Heart right ventricle (tissue), 16 donors: ENCODE measurements at regions of chr13 and their contacts with region 1.

Region 1: GRCh38 chr13:71240911-71241310 is 626.1 kb downstream of the DACH1 start:
- DNase-seq: no peak
- ATAC-seq: peak in 6 of 8 donors; percentile 53 to 80 (median 66)
- H3K4me3 ChIP-seq: no peak overlapping the region
- H3K27ac ChIP-seq: no peak overlapping the region
- H3K4me1 ChIP-seq: peaks cover 0 to 35% (median 8%) of the 10 kb centered on the region in 9 donors
- H3K27me3 ChIP-seq: no peaks in the 10 kb centered on the region
- CTCF ChIP-seq: peak in 8 of 9 donors; percentile 36 to 72 (median 48)

Region 2: DNA sequence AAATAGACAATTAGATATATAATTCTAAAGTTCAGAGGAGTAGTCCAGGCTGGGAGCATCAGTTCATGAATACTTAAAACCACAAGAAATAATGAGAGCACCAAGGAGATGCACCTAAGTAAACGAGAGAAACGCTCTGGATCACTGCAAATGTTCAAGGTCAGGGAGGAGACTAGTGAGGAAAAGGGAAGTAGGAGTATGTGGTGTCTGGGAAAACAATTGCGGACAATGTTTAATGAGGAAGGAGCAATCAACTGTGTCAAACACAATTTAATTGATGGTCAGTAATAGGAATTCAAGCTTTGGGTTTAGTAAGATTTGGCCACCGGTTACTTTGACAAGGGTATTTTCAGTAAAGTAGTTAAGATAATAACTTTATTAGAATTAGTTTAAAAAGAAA is 26.1 kb before region 1 on chr13:
- intact Hi-C with region 1: loop called in 1 of 10 experiments (anchors 2 kb)
- DNase-seq: no peak
- ATAC-seq: no peak
- H3K4me3 ChIP-seq: no peak overlapping the region
- H3K27ac ChIP-seq: no peak overlapping the region
- H3K4me1 ChIP-seq: peaks cover 0 to 28% (median 6%) of the 10 kb centered on the region in 9 donors
- H3K27me3 ChIP-seq: no peaks in the 10 kb centered on the region
- CTCF ChIP-seq: no peak

Region 3: GRCh38 chr13:71274923-71275608 is 34.2 kb after region 1 on chr13:
- intact Hi-C with region 1: no loop called
- DNase-seq: no peak
- ATAC-seq: no peak
- H3K4me3 ChIP-seq: no peak overlapping the region
- H3K27ac ChIP-seq: no peak overlapping the region
- H3K4me1 ChIP-seq: no peaks in the 10 kb centered on the region
- H3K27me3 ChIP-seq: no peaks in the 10 kb centered on the region
- CTCF ChIP-seq: no peak

Region 4: DNA sequence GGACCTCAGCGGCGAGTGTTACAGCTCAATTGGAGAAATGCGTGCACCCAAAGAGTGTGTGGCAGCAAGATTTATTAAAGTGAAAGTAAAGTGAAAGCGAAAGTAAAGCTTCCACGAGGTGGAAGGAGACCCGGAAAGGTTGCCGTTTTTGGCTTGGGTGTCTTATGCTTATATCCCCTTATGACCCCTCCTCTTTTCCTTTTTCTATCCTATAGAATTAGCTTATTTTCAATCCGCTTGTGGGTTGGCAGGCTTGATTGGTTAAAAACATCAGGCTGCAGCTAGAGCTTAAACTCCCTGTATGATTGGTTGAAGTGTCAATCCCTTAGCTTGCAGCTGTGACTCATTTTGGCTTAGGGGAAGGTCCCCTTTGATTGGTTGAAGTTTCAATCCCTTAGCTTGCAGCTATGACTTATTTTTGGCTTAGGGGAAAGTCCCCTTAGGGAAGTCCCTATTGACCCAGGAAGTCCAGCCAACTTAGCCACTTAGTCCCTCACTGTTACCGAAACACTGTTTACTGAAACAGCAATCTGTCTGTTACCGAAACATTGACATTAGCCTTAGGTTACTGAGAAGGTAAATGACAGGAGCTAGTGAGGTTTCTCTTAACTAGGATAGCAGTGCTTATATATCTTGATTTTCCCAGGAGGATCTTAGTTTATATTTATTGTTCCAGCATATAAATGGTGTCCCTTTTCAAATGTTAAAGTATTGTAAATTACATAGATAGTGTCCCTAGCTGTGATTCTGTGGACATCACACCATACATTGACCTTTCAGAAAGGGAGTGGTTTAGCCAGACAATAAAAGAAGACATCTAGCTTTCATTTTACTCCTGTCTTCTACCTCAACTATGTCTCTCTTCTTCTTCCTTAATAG is 50.3 kb after region 1 on chr13:
- intact Hi-C with region 1: no loop called
- DNase-seq: peak in 1 of 2 donors; percentile 55
- ATAC-seq: peak in 6 of 8 donors; percentile 42 to 74 (median 69)
- H3K4me3 ChIP-seq: peak overlapping the region; percentile 10 to 58 (median 50)
- H3K27ac ChIP-seq: peak overlapping the region; percentile 11 to 80 (median 58)
- H3K4me1 ChIP-seq: peaks cover 0 to 11% (median 3%) of the 10 kb centered on the region in 9 donors
- H3K27me3 ChIP-seq: no peaks in the 10 kb centered on the region
- CTCF ChIP-seq: no peak

Region 5: DNA sequence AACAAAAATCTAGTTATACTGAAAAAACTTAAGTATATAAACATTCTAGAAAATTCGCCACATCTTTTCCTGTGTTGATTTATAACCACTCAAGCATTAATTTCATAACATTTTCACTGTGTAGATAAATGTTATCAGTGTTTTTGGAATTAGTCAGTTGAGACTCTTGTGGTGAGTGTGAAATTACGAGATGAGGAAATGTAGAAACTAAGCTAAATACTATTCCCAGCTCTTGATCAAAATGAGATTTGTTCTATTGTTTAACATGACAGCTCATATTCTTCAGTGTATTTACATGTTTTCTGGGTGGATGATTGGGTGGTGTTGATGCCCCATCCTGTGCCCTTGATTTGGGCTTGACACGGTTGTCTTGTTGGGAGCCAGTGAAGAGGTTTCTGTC is 219.3 kb after region 1 on chr13:
- intact Hi-C with region 1: loop called in 1 of 10 experiments (anchors 10 kb)
- DNase-seq: no peak
- ATAC-seq: peak in 1 of 8 donors; percentile 38
- H3K4me3 ChIP-seq: no peak overlapping the region
- H3K27ac ChIP-seq: no peak overlapping the region
- H3K4me1 ChIP-seq: peaks cover 0 to 16% (median 7%) of the 10 kb centered on the region in 9 donors
- H3K27me3 ChIP-seq: no peaks in the 10 kb centered on the region
- CTCF ChIP-seq: no peak